ENCODE measurements at regions of chr11 and their contacts with region 1.

Region 1: DNA sequence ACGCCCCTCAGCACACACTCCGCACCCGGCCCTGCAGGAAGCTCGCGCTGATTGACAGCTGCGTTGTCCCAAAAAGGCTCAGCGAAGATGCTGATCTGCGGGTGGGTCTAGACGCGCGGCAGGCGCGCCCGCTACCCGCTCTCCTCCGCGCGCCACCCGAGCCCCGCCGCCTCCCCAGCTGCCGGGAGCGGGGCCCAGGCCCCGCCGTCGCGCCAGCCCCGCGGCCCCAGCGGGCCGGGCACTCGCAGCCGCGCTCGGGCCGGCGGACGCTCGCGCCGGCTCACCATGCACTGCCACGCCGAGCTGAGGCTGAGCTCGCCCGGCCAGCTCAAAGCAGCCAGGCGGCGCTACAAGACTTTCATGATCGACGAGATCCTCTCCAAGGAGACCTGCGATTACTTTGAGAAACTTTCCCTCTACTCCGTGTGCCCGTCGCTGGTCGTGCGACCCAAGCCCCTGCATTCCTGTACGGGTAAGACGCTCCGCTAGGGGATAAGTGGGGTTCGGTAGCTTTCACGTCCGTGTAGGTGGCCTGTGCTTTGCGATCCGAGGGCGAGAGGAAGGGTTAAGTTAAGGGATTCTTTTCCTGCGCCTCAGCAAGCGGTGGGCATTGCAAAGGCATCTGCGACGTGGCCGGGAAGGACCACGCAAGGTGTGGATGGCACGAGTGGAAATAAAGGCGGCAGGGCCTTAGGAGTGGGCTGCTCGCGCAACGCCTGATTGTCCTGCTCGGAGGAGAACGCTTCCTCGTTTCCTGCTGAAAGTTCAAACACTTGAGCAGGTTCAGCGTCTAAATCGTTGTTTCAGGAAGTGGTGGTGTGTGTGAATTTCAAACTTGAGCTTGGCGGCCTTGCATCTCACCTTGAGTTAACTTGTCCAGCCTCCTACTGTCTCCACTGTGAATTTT is at the start of gene BARX2:
- DNase-seq: peak; percentile 88 to 90
- H3K4me3 ChIP-seq: peak within 1 kb of the TSS; percentile 50
- H3K4me3 Mint-ChIP-seq: peak within 1 kb of the TSS; percentile 77
- H3K27ac Mint-ChIP-seq: peak within 1 kb of the TSS; percentile 27
- H3K4me1 ChIP-seq: 0 out of 2 replicates have a peak, but pooled peaks cover 6% of the 10 kb centered on the region
- H3K4me1 Mint-ChIP-seq: peaks cover 6% of the 10 kb centered on the region
- H3K27me3 ChIP-seq: peaks cover 6% of the 10 kb centered on the region
- H3K27me3 Mint-ChIP-seq: peaks cover 30% of the 10 kb centered on the region
- CTCF ChIP-seq: peak; percentile 71 to 96
- total RNA-seq, gene BARX2: 0.82 and 1.1 TPM in 2 replicates

Region 2: GRCh38 chr11:129427376-129427775 is 51.4 kb after region 1 on chr11:
- CTCF ChIA-PET with region 1: interaction called, 9 read pairs
- POLR2A ChIA-PET with region 1: no interaction called
- intact Hi-C with region 1: loop called (anchors 1 kb)
- DNase-seq: peak; percentile 79 to 81
- H3K4me3 ChIP-seq: no peak overlapping the region
- H3K4me3 Mint-ChIP-seq: peak overlapping the region; percentile 32
- H3K27ac Mint-ChIP-seq: peak overlapping the region; percentile 54
- H3K4me1 ChIP-seq: peaks cover 63% of the 10 kb centered on the region
- H3K4me1 Mint-ChIP-seq: peaks cover 50% of the 10 kb centered on the region
- H3K27me3 ChIP-seq: no peaks in the 10 kb centered on the region
- H3K27me3 Mint-ChIP-seq: no peaks in the 10 kb centered on the region
- CTCF ChIP-seq: no peak

Region 3: DNA sequence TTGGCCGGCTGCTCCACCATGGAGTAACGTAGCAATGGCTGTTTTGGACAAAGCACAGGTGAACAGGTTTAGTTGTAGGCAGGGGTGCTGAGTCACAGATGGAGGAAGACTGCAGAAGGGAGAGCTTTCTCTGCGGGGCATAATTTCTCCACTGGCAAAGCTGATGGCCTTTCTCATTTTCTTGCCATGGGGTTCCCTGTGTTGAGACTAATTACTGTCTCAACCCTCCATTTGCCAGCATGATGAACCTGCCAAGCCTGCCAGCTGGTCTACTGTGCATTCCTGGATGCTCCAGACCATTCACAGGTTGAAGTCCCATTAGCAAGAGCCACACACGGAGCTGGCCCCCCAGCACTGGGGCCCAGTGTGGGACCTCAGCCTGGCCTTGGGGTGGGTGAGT is 202.0 kb after region 1 on chr11:
- CTCF ChIA-PET with region 1: interaction called, 4 read pairs
- POLR2A ChIA-PET with region 1: no interaction called
- intact Hi-C with region 1: loop called (anchors 2 kb)
- DNase-seq: no peak
- H3K4me3 ChIP-seq: no peak overlapping the region
- H3K4me3 Mint-ChIP-seq: no peak overlapping the region
- H3K27ac Mint-ChIP-seq: no peak overlapping the region
- H3K4me1 ChIP-seq: no peaks in the 10 kb centered on the region
- H3K4me1 Mint-ChIP-seq: no peaks in the 10 kb centered on the region
- H3K27me3 ChIP-seq: no peaks in the 10 kb centered on the region
- H3K27me3 Mint-ChIP-seq: no peaks in the 10 kb centered on the region
- CTCF ChIP-seq: no peak

Region 4: GRCh38 chr11:129652828-129653227 is 276.8 kb after region 1 on chr11:
- CTCF ChIA-PET with region 1: interaction called, 8 read pairs
- POLR2A ChIA-PET with region 1: no interaction called
- intact Hi-C with region 1: loop called (anchors 2 kb)
- DNase-seq: no peak
- H3K4me3 ChIP-seq: no peak overlapping the region
- H3K4me3 Mint-ChIP-seq: no peak overlapping the region
- H3K27ac Mint-ChIP-seq: no peak overlapping the region
- H3K4me1 ChIP-seq: no peaks in the 10 kb centered on the region
- H3K4me1 Mint-ChIP-seq: no peaks in the 10 kb centered on the region
- H3K27me3 ChIP-seq: no peaks in the 10 kb centered on the region
- H3K27me3 Mint-ChIP-seq: peaks cover 3% of the 10 kb centered on the region
- CTCF ChIP-seq: no peak

Region 5: DNA sequence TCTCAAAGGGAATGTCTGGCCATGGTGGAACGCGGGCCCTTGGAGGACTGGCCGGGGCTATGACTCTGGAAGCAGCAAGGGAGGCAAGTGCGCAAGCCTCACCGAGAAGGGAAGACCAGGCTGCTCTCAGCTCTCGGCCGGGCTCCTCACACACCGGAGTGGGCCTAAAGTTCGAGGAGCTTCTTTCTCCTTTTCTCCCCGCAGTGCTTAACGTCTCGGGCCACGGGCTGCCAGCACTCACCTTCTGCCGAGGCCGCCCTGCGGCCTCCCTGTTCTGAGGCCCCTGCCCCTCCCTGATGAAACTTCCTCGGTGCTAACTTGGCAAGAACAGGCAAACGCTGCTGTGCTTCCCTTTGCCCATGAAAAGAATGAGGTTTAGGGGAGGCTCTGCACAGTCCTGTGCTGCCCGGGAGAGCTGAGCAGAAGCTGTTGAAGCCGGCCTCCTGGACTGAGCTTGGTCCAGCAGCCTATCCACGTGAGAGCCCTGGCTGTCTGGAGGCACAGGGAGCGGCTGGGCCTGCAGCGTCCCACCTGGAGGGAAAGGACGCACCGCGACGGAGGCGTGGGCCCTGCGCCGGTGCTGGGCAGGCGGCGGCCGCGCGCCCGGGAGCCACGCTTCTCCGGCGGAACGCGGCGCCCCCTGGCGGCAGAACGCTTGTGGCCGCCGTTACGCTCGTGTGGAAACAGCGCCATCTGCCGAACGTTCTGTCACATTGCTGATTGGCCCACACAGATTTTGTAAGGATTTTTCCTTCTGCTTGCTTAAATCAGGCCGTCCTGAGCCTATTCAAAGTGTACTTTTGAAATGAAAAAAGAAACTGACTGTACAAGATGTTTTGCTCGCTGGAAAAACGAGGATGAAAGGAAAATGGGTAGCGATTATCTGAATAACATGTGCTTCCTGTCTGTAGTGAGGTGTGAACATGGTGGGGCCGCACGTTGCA is 374.6 kb after region 1 on chr11:
- CTCF ChIA-PET with region 1: interaction called, 23 read pairs
- POLR2A ChIA-PET with region 1: no interaction called
- intact Hi-C with region 1: loop called (anchors 1 kb)
- DNase-seq: peak; percentile 80 to 93
- H3K4me3 ChIP-seq: peak overlapping the region; percentile 18; the same call in 1 of the 2 replicates
- H3K4me3 Mint-ChIP-seq: peak overlapping the region; percentile 50
- H3K27ac Mint-ChIP-seq: no peak overlapping the region
- H3K4me1 ChIP-seq: peaks cover 5% of the 10 kb centered on the region
- H3K4me1 Mint-ChIP-seq: no peaks in the 10 kb centered on the region
- H3K27me3 ChIP-seq: no peaks in the 10 kb centered on the region
- H3K27me3 Mint-ChIP-seq: no peaks in the 10 kb centered on the region
- CTCF ChIP-seq: peak; percentile 100